Mucosa of descending colon (tissue), 3 donors: ENCODE measurements at regions of chr15 and their contacts with region 1.

Region 1: DNA sequence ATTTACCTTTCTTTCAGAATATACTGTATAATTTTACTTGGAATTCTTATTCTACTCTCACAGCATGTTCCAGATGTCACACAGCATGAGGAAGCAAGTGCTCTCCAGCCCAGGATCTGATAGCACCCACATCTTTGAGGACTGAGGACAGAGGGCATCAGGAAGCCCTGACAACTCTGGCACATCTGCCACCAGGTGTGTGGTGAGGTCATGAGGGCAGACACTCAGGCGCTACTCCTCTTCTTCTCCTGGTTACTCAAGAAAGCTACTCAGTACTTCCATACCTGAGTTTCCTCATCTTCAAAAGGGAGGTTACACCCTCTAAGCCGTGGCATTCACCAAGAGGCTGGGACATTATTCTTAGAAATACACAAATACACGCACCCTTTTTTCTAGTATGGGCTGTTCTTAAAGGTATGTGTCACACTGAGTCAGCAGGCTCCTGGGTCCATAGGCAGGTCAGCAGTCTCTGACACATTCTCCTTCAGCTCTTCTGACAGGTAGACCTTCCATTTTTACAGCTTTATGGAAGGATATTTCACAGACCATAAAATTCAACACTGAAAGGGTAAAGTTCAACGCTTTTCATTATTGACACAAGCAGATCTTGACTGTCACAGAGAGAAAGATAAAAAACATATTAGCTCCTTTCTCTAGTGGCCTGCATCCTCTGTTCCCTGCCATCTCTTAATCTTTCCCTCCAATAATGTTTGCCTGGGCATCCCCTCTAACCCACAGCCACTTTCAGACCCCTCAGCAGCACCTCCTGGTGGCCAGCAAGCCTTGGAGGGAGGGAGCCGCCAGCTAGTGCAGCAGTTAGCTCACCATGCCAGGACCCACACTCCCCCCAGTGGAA is 103.2 kb upstream of the TJP1 start:
- DNase-seq: peak; percentile 63 to 66 (median 66)
- ATAC-seq: peak; percentile 97
- H3K4me3 ChIP-seq: no peak overlapping the region
- H3K4me1 ChIP-seq: peaks cover 15% of the 10 kb centered on the region
- CTCF ChIP-seq: no peak

Region 2: DNA sequence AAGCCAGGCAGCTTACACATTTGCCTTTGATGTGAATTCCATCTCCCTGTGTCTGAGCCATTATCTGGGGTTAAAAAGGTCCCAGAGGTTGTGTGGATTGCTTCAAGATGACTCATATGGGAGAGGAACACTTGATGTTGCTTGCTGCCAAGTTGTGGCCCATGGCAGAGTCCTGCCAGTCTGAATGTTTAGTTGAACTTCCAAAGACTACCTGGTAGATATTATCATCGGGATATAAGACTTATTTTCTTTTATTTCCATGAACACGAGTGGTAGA is 188.8 kb before region 1 on chr15:
- intact Hi-C with region 1: loop called in 1 of 2 experiments (anchors 10 kb)
- DNase-seq: no peak
- ATAC-seq: peak; percentile 50
- H3K4me3 ChIP-seq: no peak overlapping the region
- H3K4me1 ChIP-seq: no peaks in the 10 kb centered on the region
- CTCF ChIP-seq: no peak

Region 3: GRCh38 chr15:29835301-29835700 is 90.2 kb before region 1 on chr15:
- intact Hi-C with region 1: no loop called
- DNase-seq: no peak
- ATAC-seq: peak; percentile 55
- H3K4me3 ChIP-seq: no peak overlapping the region
- H3K4me1 ChIP-seq: no peaks in the 10 kb centered on the region
- CTCF ChIP-seq: no peak